Activated T-helper 1 cell treated with anti-CD3 and anti-CD28 coated beads, Interleukin-12 subunit alpha, Interleukin-12 subunit beta, Interleukin-2, Interleukin-4 antibody, amounts not matched to agents 30 ng/mL and 10 ng/mL and 1 ng/mL, durations not matched to agents 14 hours and 24 hours and 36 hours (primary cell): ENCODE measurements at regions of chr18 and their contacts with region 1.

Region 1: DNA sequence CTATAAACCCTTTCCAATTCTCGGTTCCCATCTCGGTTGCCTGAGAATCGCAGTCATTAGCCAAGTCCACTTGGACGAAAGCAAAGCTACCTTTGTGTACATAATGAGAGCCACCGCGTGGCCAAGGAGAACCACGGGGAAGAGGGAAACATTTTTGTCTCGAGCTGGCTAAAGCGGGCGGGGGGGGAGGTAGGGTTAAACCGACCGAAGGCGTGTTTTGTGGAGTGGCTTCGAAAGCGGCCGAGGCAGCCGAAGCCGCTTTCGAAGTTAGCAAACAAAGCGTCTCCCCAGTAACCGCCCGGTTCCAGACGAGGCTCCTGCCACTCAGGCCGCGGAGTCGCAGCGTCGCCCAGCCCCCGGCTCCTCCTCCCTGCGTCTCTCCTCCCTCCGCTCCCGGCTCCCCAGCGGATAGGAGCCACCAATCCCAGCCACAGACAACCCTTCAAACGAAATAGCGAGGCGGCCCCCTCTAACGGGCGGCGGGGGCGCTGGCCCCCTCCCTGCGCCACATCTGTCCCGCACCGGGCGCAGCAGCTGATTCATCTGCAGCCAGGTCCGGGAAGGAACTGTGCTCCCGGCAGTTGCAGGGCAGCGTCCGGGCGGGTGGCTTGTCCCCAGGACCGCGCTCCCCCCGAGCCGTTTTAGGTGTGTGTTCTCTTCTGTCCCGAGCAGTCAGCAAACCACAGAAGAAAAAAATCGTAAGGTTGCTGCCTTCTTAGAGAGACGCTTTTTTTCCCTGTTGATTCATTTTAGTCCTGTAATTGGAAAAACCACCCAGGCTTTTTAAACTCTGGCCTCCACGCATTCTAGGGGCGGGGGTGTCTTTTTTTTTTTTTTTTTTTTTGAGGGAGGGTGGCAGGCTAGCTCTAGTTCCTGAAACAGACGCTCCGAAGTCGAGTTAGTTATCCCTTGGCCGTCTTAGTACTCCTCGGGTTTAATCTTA is 1.8 kb upstream of the TGIF1 start:
- DNase-seq: peak; percentile 81
- H3K4me3 Mint-ChIP-seq: peak overlapping the region; percentile 97
- H3K27ac Mint-ChIP-seq: peak overlapping the region; percentile 100
- H3K4me1 Mint-ChIP-seq: peaks cover 44% of the 10 kb centered on the region
- H3K27me3 Mint-ChIP-seq: peaks cover 2% of the 10 kb centered on the region

Region 2: GRCh38 chr18:2641638-2642037 is 806.5 kb before region 1 on chr18:
- intact Hi-C with region 1: loop called (anchors 5 kb)
- DNase-seq: no peak
- H3K4me3 Mint-ChIP-seq: peak overlapping the region; percentile 73
- H3K27ac Mint-ChIP-seq: peak overlapping the region; percentile 94
- H3K4me1 Mint-ChIP-seq: peaks cover 53% of the 10 kb centered on the region
- H3K27me3 Mint-ChIP-seq: peaks cover 2% of the 10 kb centered on the region

Region 3: DNA sequence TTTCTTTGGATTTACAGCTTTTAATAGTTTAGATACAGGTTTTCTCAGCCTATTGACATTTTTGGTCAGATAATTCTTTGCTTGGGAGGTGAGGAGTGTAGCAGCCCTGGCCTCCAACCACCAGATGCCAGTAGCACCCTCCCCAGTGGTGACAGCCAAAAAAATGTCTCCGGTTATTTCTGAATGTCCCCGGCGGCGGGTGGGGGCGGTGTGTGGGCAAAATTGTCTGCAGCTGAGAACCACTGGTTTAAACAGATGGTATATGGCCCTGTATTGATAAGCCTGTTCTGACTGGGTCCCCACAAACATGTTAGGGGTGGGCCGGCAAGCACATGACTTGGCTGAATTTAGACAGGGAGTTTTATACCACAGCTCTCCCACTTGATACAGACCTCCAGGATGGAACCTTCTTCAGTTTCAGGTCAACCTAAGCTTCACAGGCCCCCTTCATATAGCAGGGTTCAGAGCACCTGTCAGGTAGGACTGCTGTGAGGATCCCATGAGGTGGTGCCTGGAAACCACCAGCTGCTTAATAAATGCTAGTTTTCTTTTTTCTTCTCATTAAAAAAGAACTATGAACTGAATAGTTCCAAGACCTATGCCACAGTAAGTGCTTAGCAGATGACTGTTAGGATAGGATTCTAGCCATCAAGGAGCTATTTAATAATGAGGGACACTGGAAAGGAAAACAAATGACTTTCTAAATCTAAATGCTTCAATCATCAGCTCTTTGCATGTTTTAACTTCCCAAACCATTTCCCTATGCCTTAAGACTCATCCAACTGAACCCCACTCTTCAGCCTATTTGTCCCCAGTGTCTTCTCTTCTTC is 453.3 kb before region 1 on chr18:
- intact Hi-C with region 1: loop called (anchors 10 kb)
- DNase-seq: peak; percentile 58
- H3K4me3 Mint-ChIP-seq: peak overlapping the region; percentile 60
- H3K27ac Mint-ChIP-seq: peak overlapping the region; percentile 83
- H3K4me1 Mint-ChIP-seq: peaks cover 82% of the 10 kb centered on the region
- H3K27me3 Mint-ChIP-seq: no peaks in the 10 kb centered on the region

Region 4: GRCh38 chr18:3261371-3262246 is 186.6 kb before region 1 on chr18 and contains the start of gene MYL12B:
- intact Hi-C with region 1: loop called (anchors 1 kb)
- DNase-seq: peak; percentile 75
- H3K4me3 Mint-ChIP-seq: peak within 1 kb of the TSS; percentile 93
- H3K27ac Mint-ChIP-seq: peak within 1 kb of the TSS; percentile 98
- H3K4me1 Mint-ChIP-seq: peaks cover 82% of the 10 kb centered on the region
- H3K27me3 Mint-ChIP-seq: no peaks in the 10 kb centered on the region
- total RNA-seq, gene MYL12B: 234 and 235 TPM in 2 replicates

Region 5: DNA sequence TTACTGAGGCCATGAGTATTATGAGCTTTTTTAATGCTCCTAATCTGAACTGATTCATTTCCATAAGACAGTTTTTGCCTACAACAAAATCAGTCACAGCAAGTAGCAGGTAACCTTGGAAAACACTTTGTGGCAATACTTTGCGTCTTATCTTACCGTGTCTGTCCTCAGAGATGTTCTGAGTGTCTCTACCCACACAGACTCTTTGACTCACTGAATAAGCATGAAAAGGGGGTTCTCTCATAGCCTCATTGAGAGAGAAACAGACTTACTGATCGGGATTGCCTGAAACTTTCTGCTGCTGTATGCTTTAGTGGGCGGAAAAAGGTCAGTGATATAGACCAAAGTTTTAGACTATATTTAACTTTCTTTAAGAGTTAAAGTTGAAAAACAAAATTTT is 93.7 kb before region 1 on chr18:
- intact Hi-C with region 1: loop called (anchors 1 kb)
- DNase-seq: no peak
- H3K4me3 Mint-ChIP-seq: no peak overlapping the region
- H3K27ac Mint-ChIP-seq: peak overlapping the region; percentile 6
- H3K4me1 Mint-ChIP-seq: peaks cover 10% of the 10 kb centered on the region
- H3K27me3 Mint-ChIP-seq: no peaks in the 10 kb centered on the region

Region 6: GRCh38 chr18:3593904-3594661 is 145.9 kb after region 1 on chr18:
- intact Hi-C with region 1: loop called (anchors 2 kb)
- DNase-seq: peak; percentile 83
- H3K4me3 Mint-ChIP-seq: peak overlapping the region; percentile 89
- H3K27ac Mint-ChIP-seq: peak overlapping the region; percentile 98
- H3K4me1 Mint-ChIP-seq: peaks cover 63% of the 10 kb centered on the region
- H3K27me3 Mint-ChIP-seq: no peaks in the 10 kb centered on the region

Region 7: GRCh38 chr18:3665780-3666525 is 217.8 kb after region 1 on chr18:
- intact Hi-C with region 1: loop called (anchors 1 kb)
- DNase-seq: peak; percentile 59
- H3K4me3 Mint-ChIP-seq: peak overlapping the region; percentile 57
- H3K27ac Mint-ChIP-seq: no peak overlapping the region
- H3K4me1 Mint-ChIP-seq: peaks cover 42% of the 10 kb centered on the region
- H3K27me3 Mint-ChIP-seq: peaks cover 5% of the 10 kb centered on the region

Region 8: GRCh38 chr18:3910512-3910911 is 462.3 kb after region 1 on chr18:
- intact Hi-C with region 1: no loop called
- DNase-seq: no peak
- H3K4me3 Mint-ChIP-seq: no peak overlapping the region
- H3K27ac Mint-ChIP-seq: no peak overlapping the region
- H3K4me1 Mint-ChIP-seq: no peaks in the 10 kb centered on the region
- H3K27me3 Mint-ChIP-seq: no peaks in the 10 kb centered on the region